ENCODE measurements at regions of chr19 and their contacts with region 1.

Region 1: GRCh38 chr19:46932346-46932745 is 71.5 kb downstream of the ARHGAP35 start:
- DNase-seq: no peak
- ATAC-seq: peak in 1 of 8 donors; percentile 14
- H3K4me3 ChIP-seq: no peak overlapping the region
- H3K27ac ChIP-seq: peak overlapping the region in 4 of 10 donors; percentile 25 to 67 (median 36)
- H3K4me1 ChIP-seq: peaks cover 0 to 93% (median 76%) of the 10 kb centered on the region in 9 donors
- H3K27me3 ChIP-seq: no peaks in the 10 kb centered on the region
- CTCF ChIP-seq: no peak

Region 2: DNA sequence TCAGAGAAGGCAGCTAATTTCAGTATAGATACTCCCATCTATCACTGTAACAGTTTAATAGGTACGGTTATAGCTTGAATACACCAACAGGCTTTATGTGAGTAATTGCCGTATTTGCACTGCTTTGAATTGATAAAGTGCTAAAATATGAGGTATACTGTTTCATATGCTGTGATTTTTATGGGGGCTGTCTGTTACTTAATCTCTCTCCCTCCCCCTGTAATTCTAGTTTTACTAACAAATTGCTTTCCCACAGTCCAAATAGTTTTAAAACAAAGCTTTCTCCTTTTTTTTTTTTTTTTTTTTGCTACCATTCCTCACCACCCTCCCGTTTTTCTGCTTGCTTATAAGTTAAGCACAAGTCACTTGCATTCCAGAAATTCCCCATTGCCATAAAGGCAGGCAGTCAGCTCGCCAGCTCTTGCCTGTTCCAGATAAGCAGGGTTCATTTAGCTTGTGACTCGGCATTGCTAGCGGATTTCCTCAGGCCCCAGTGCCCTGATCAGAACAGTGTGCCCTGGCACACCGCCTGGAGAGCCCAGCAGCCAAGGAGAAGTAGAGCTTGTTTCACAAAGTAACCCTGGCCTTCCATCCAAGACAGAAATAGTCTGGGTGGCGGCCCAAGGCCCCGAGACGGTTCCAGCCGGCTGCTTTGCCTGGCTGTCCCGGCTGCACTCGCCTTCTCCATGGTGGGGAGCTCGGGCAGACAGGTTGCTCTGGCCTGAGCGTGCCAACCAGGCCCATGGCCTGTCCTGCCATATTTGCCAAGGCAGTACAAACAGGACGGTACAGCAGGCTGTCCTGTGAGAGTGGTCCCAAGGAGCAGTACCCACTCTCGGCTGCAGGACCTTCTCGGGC is 43.8 kb after region 1 on chr19:
- intact Hi-C with region 1: loop called in 4 of 10 experiments (anchors 5 to 10 kb)
- DNase-seq: peak; percentile 90 to 94
- ATAC-seq: peak; percentile 84 to 94 (median 90)
- H3K4me3 ChIP-seq: peak overlapping the region in 1 of 10 donors; percentile 7
- H3K27ac ChIP-seq: peak overlapping the region; percentile 68 to 96 (median 86)
- H3K4me1 ChIP-seq: peaks cover 25 to 88% (median 72%) of the 10 kb centered on the region in 9 donors
- H3K27me3 ChIP-seq: no peaks in the 10 kb centered on the region
- CTCF ChIP-seq: no peak

Region 3: DNA sequence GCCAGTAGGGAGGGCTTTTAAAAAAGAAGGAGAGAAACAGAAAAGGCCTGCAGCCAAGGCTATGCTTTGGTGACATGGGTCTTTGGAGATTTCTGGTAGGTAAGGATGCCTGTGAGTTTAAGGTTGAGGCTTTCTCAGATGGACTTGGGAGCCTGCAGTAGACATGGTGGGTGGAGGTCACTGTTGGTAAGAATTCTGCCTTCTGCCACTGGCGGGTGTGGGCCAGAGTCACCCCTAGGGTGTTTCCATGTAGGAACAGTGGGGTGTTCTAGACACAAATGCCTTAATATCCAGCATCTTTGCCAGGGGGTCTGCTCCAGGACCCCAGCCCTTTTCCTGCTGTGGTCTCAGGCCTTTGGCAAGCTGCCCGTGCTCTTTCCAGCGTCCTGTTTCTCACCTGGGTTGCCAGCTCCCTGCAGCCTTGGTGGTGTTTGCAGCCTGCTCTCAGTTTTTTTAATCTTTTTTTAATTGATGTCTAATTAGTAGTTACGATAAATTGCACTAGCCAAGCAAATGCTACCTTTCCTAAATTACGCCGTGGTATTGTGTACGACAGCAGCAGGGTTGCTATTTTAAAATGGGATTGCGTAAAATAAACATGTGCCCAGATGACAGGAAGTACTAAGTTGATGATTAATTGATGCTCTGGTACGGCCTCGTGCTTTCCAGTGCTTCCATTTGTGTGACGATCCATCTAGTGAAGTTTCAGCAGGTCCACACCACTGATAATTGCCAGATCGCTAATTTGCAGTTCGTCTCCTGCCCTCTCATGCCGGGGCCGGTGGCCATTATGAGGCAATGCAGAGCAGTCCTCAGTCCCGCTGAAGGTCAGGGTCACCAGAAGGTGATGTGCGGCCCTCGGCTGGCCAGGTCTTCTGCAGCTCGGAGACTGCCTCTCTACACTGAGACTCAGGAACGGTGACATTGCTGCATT is 52.0 kb after region 1 on chr19:
- intact Hi-C with region 1: loop called in 4 of 10 experiments (anchors 5 to 10 kb)
- DNase-seq: peak in 1 of 2 donors; percentile 42
- ATAC-seq: peak in 7 of 8 donors; percentile 50 to 88 (median 76)
- H3K4me3 ChIP-seq: no peak overlapping the region
- H3K27ac ChIP-seq: peak overlapping the region; percentile 44 to 84 (median 78)
- H3K4me1 ChIP-seq: peaks cover 14 to 82% (median 64%) of the 10 kb centered on the region in 9 donors
- H3K27me3 ChIP-seq: no peaks in the 10 kb centered on the region
- CTCF ChIP-seq: no peak